Stomach (tissue), 19 donors: ENCODE measurements at regions of chr12 and their contacts with region 1.

Region 1: GRCh38 chr12:113048716-113049127 is 7.8 kb upstream of the DTX1 start:
- DNase-seq: peak; percentile 57 to 88
- H3K4me3 ChIP-seq: no peak overlapping the region
- H3K27ac ChIP-seq: no peak overlapping the region
- H3K4me1 ChIP-seq: no peaks in the 10 kb centered on the region
- H3K27me3 ChIP-seq: peaks cover 0 to 65% (median 5%) of the 10 kb centered on the region in 3 donors
- CTCF ChIP-seq: peak in 5 of 7 experiments; percentile 48 to 93 (median 78)
- EP300 ChIP-seq: no peak
- POLR2A ChIP-seq: no peak

Region 2: DNA sequence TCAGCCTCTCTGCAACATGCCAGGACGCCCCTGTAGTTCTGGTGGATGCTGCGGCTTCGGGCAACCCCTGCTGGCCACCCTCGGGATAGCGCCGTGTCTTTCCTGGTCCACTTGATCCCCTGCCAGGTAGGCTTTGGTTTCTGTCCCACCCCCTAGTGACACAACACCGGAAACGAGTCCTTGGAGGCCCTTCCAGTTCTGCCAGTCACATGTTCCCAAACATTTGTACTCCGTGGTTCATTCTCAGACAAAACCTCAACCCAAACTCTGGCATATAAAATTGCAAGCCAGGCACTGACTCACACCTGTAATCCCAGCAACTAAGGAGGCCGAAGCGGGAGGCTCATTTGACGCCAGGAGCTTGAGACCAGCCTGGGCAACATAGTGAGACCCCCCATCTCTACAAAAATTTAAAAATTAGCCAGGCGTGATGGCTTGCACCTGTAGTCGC is 49.7 kb after region 1 on chr12:
- intact Hi-C with region 1: loop called (anchors 5 kb)
- DNase-seq: peak; percentile 90 to 93
- H3K4me3 ChIP-seq: no peak overlapping the region
- H3K27ac ChIP-seq: peak overlapping the region in 3 of 5 donors; percentile 11 to 35 (median 25)
- H3K4me1 ChIP-seq: peaks cover 0 to 15% (median 10%) of the 10 kb centered on the region in 4 donors
- H3K27me3 ChIP-seq: peaks cover 0 to 31% (median 0%) of the 10 kb centered on the region in 3 donors
- CTCF ChIP-seq: peak in 6 of 7 experiments; percentile 59 to 88 (median 84)
- EP300 ChIP-seq: no peak
- POLR2A ChIP-seq: no peak

Region 3: GRCh38 chr12:113174461-113175384 is 126.0 kb after region 1 on chr12:
- intact Hi-C with region 1: loop called (anchors 5 kb)
- DNase-seq: peak; percentile 79 to 87
- H3K4me3 ChIP-seq: no peak overlapping the region
- H3K27ac ChIP-seq: no peak overlapping the region
- H3K4me1 ChIP-seq: peaks cover 0 to 3% (median 0%) of the 10 kb centered on the region in 4 donors
- H3K27me3 ChIP-seq: no peaks in the 10 kb centered on the region
- CTCF ChIP-seq: peak in 5 of 7 experiments; percentile 89 to 99 (median 98)
- EP300 ChIP-seq: no peak
- POLR2A ChIP-seq: no peak